GM10248 (cell line): ENCODE measurements at regions of chr2 and their contacts with region 1.

Region 1: GRCh38 chr2:199940373-199940772 is 14.9 kb downstream of the TYW5 start:
- DNase-seq: no peak
- CTCF ChIP-seq: no peak

Region 2: DNA sequence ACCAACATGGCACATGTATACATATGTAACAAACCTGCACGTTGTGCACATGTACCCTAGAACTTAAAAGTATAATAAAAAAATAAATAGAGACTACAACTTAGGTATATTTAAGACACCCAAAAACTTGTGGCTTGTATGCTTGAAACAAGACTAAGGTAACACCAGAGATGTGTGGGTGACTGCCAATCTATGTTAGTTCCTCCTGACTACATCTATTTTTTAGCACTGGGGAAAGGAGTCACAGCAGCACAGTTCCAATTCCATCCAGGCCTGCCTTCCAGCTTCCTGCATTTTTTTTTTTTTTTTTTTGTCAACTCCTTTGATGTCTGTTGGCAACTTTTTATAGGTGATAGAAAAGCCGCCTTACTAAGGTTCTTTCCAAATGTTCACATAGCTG is 11.1 kb before region 1 on chr2:
- CTCF ChIA-PET with region 1: interaction called, 18 read pairs
- POLR2A ChIA-PET with region 1: no interaction called
- DNase-seq: no peak
- CTCF ChIP-seq: no peak

Region 3: GRCh38 chr2:199950396-199950795 is 10.0 kb after region 1 on chr2:
- CTCF ChIA-PET with region 1: interaction called, 18 read pairs
- POLR2A ChIA-PET with region 1: no interaction called
- DNase-seq: no peak
- CTCF ChIP-seq: no peak